Calu3 (cell line): ENCODE measurements at regions of chr13 and their contacts with region 1.

Region 1: GRCh38 chr13:43744256-43745031 is 42.3 kb downstream of the ENOX1 start:
- DNase-seq: no peak
- H3K4me3 Mint-ChIP-seq: no peak overlapping the region
- H3K27ac Mint-ChIP-seq: no peak overlapping the region
- H3K4me1 Mint-ChIP-seq: no peaks in the 10 kb centered on the region
- H3K27me3 Mint-ChIP-seq: no peaks in the 10 kb centered on the region
- CTCF ChIP-seq: no peak

Region 2: DNA sequence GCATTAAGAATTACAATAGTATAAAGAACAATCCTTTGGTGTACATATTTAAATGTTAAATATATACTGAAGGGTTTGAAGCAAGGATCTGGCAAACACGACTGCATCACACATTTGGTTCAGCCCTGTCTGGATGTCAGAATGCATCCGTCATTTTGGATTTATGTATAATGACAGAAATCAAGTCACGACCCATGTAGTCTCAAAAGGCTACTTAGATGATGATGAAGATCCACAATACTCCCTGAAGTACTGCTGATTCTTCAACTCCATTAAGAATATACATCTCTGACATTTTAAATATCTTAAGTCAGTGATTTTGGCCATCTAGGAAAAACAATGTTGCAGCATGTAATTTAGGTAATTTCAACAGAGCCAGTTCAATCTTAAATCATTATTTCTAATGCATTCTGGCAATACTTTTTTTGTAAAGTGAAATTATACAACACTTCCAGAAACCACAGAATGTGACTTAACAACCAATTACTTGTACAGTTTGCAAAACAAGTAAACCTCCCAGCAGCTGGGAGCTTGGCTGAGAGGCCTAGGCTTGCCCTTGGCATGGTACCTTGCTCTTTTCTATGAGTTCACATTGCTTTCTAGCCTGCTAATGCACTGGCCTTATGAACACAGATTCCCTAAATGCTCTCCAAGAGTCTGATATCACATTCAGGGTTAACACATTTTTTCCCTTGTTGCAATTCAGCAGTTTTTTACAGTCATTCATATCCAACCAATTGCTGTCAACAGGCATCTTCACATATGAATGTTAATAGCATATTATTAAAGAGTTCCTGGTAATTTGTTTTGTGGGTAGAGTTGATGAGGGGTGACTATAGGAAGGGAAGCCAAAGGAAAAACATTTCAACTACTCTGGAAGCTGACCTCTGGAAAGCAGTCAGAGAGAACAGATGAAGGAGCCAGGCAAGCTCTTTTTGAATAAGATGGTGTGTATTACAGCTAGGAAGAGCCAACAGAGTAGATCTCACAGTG is 132.9 kb before region 1 on chr13:
- CTCF ChIA-PET with region 1: no interaction called
- intact Hi-C with region 1: no loop called
- DNase-seq: no peak
- H3K4me3 Mint-ChIP-seq: no peak overlapping the region
- H3K27ac Mint-ChIP-seq: no peak overlapping the region
- H3K4me1 Mint-ChIP-seq: no peaks in the 10 kb centered on the region
- H3K27me3 Mint-ChIP-seq: no peaks in the 10 kb centered on the region
- CTCF ChIP-seq: no peak

Region 3: GRCh38 chr13:43640476-43640875 is 104.0 kb before region 1 on chr13:
- CTCF ChIA-PET with region 1: no interaction called
- intact Hi-C with region 1: no loop called
- DNase-seq: no peak
- H3K4me3 Mint-ChIP-seq: no peak overlapping the region
- H3K27ac Mint-ChIP-seq: no peak overlapping the region
- H3K4me1 Mint-ChIP-seq: no peaks in the 10 kb centered on the region
- H3K27me3 Mint-ChIP-seq: no peaks in the 10 kb centered on the region
- CTCF ChIP-seq: no peak

Region 4: GRCh38 chr13:43698758-43699157 is 45.7 kb before region 1 on chr13:
- CTCF ChIA-PET with region 1: interaction called, 10 read pairs
- intact Hi-C with region 1: no loop called
- DNase-seq: no peak
- H3K4me3 Mint-ChIP-seq: no peak overlapping the region
- H3K27ac Mint-ChIP-seq: no peak overlapping the region
- H3K4me1 Mint-ChIP-seq: no peaks in the 10 kb centered on the region
- H3K27me3 Mint-ChIP-seq: no peaks in the 10 kb centered on the region
- CTCF ChIP-seq: no peak